Colonic mucosa (tissue), 4 donors: ENCODE measurements at regions of chr5 and their contacts with region 1.

Region 1: DNA sequence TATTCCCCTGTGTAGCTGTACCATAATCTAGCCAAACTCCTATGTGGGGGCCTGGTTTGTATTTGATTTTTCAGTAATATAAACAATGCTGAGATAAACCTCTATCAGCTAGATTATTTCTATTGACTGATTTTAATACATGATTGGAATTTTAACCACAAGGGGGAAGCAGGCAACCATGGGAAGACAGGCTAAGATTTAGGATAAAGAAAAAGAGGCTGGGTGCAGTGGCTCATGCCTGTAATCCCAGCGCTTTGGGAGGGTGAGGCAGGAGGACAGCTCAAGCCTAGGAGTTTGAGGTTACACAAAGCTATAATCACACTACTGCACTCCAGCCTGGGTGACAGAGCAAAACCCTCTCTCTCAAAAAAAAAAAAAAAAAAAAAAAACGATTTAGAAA is 18.1 kb upstream of the GPX3 start:
- DNase-seq: peak; percentile 30
- H3K4me3 ChIP-seq: no peak overlapping the region
- H3K27ac ChIP-seq: no peak overlapping the region
- H3K4me1 ChIP-seq: peaks cover 3% of the 10 kb centered on the region
- H3K27me3 ChIP-seq: no peaks in the 10 kb centered on the region
- CTCF ChIP-seq: peak; percentile 25

Region 2: DNA sequence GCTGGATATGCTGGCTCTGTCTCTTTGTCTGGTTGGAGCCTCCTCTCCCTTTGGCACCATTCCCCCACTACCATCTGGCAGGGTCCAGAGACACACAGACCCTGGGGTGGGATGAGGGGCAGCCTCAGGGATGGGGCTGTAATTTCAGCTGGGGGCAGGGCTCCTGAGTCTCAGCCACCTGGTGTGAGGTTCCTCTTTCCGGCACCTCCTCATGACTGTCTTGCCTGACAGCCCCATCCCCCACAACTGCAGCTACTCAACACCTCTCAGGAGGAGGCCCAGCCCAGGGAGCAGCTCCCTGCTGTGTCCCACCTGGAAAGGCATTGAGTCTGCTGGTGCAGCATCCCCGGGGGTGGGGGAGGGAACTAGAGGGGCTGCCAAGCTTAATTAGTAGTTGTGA is 541.0 kb before region 1 on chr5:
- intact Hi-C with region 1: no loop called
- DNase-seq: no peak
- H3K4me3 ChIP-seq: no peak overlapping the region
- H3K27ac ChIP-seq: no peak overlapping the region
- H3K4me1 ChIP-seq: no peaks in the 10 kb centered on the region
- H3K27me3 ChIP-seq: no peaks in the 10 kb centered on the region
- CTCF ChIP-seq: no peak

Region 3: DNA sequence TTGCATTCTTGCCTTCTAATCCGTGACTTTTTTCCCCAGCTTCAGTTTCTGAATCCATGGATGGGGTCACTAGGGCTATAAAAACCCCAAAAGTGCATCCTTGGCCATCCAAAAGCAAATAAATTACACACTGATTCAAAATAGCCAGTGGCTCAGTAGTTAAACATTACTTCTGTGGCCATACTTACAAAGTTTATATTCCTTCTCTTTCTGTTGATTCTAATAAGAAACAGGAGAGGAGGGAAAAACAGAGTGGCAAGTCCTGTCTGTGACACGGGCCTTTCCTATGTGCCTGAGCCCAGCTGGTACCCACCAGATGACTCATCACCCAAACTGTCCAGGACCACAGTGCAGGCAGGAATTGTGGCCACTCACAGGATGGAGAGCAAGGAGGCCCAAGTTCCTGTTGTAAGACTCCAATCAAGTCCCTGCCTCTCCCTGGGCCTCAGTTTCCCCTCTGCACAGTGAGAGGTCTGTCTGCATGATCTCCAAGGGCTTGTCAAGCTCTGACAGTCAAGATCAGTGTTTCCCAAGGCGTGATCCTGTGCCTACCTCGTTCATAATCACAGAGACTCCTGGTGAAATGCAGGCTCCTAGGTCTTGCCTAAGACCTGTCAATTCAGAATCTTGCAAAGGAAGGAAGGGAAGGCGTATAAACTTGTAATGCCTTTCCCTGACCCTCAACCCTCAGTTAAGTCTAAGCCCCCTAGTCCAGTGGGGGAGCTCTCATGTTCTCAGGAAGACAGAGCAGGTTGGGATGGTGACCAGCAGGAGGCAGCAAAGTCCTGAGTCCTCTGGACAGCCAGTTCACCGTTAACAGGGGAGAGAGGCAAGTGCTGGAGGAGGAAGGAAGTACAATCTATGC is 49.0 kb after region 1 on chr5:
- intact Hi-C with region 1: loop called (anchors 5 kb)
- DNase-seq: peak; percentile 84
- H3K4me3 ChIP-seq: no peak overlapping the region
- H3K27ac ChIP-seq: no peak overlapping the region
- H3K4me1 ChIP-seq: peaks cover 4% of the 10 kb centered on the region
- H3K27me3 ChIP-seq: no peaks in the 10 kb centered on the region
- CTCF ChIP-seq: peak; percentile 77

Region 4: DNA sequence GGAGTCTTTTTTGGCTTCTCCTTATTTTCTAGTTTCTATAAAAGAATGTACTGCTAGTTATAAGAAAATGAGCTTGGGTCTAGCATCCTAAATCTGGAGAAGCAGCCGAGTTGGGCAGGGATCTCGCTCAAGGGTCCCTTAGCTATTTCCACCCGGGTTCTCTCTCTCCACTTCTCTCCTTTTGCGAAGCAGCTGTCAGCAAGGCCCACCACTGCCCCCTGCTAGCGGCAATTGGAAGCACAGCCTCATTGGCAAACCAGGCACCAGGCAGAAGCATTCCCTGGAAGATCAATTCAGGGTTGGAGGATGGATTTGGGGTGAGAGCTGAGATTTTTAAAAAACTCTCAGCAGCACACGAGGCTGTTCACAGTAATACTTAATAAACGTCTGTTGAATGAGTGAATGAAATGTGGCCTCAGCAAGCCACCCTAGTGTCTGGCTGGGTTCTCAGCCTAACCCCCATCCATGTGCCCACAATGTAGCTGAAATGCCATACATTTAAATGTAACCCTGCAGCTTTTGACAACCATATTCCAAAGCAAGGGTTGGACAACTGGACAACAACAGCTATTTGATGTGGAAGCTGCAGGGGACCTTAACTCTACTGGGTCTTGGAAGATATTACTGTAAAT is 113.1 kb after region 1 on chr5:
- intact Hi-C with region 1: loop called (anchors 5 kb)
- DNase-seq: peak; percentile 85
- H3K4me3 ChIP-seq: no peak overlapping the region
- H3K27ac ChIP-seq: no peak overlapping the region
- H3K4me1 ChIP-seq: no peaks in the 10 kb centered on the region
- H3K27me3 ChIP-seq: no peaks in the 10 kb centered on the region
- CTCF ChIP-seq: peak; percentile 97

Region 5: DNA sequence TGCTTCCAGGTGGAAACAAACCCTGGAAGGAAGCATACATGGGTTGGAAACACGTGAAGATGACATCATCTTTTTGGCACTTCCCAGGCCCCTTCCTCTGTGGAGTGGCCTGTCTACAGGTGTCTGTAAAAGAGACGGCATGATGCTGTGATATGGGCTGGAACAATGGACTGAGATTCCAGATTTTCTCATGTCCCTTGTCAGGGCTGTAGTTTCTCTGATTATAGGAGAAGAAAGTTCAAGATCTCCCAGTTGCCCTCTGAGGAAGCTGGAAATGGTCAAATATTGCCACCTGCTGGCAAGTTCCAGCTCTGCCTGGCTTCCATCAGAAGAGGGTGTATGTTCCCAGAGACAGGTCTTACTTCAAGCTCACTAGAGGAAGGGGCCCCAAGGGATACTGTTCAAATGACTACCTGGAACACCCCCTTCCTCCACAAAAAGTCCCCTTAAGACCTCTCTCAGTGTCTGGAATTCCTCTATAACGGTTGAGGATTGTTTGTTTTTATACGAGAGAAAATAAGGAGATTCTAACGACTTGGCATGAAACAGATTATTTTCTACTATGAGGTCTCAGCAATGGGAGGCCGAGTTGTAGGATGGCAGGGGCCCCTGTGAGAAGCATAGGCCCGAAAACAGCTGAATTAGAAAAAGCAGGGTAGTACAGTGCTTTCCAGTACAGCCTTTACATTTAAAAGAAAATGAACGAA is 162.6 kb after region 1 on chr5:
- intact Hi-C with region 1: loop called (anchors 5 kb)
- DNase-seq: peak; percentile 82
- H3K4me3 ChIP-seq: no peak overlapping the region
- H3K27ac ChIP-seq: no peak overlapping the region
- H3K4me1 ChIP-seq: no peaks in the 10 kb centered on the region
- H3K27me3 ChIP-seq: no peaks in the 10 kb centered on the region
- CTCF ChIP-seq: peak; percentile 91